Sigmoid colon (tissue), 7 donors: ENCODE measurements at regions of chr5 and their contacts with region 1.

Region 1: GRCh38 chr5:55601204-55601618 is 66.4 kb upstream of the PLPP1 start:
- DNase-seq: peak; percentile 95
- H3K4me3 ChIP-seq: peak overlapping the region in 2 of 4 donors; percentile 19
- H3K27ac ChIP-seq: peak overlapping the region; percentile 76 to 93 (median 88)
- H3K4me1 ChIP-seq: peaks cover 0 to 80% (median 78%) of the 10 kb centered on the region in 4 donors
- H3K27me3 ChIP-seq: no peaks in the 10 kb centered on the region
- CTCF ChIP-seq: no peak
- EP300 ChIP-seq: peak in 3 of 4 donors; percentile 39 to 90 (median 63)
- POLR2A ChIP-seq: no peak

Region 2: DNA sequence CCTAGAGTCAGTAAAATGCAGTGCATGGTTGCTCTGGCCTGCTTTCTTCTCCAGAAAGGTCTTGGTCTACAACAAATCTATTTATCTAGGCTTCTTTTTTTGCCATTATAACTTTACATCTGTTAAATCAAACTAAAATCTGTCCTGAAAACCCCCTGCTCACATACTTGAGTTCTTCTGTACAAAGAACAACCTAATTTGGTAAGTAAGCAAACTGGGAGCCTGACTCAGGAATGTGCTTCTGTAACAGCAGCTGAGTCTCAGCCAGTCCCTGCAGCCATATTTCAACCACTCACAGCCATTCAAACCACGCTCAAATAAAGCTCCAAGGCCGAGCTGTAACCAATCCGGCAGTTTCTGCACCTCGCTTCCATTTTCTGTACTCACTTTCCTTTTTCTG is 162.2 kb before region 1 on chr5:
- intact Hi-C with region 1: loop called (anchors 5 kb)
- DNase-seq: peak; percentile 87
- H3K4me3 ChIP-seq: no peak overlapping the region
- H3K27ac ChIP-seq: peak overlapping the region; percentile 80 to 92 (median 85)
- H3K4me1 ChIP-seq: peaks cover 0 to 88% (median 79%) of the 10 kb centered on the region in 4 donors
- H3K27me3 ChIP-seq: no peaks in the 10 kb centered on the region
- CTCF ChIP-seq: no peak
- EP300 ChIP-seq: peak in 2 of 4 donors; percentile 45 to 55
- POLR2A ChIP-seq: no peak

Region 3: GRCh38 chr5:55480781-55481180 is 120.4 kb before region 1 on chr5:
- intact Hi-C with region 1: no loop called
- DNase-seq: no peak
- H3K4me3 ChIP-seq: no peak overlapping the region
- H3K27ac ChIP-seq: no peak overlapping the region
- H3K4me1 ChIP-seq: peaks cover 0 to 39% (median 17%) of the 10 kb centered on the region in 4 donors
- H3K27me3 ChIP-seq: no peaks in the 10 kb centered on the region
- CTCF ChIP-seq: no peak
- EP300 ChIP-seq: no peak
- POLR2A ChIP-seq: no peak

Region 4: GRCh38 chr5:55672477-55672911 is 71.3 kb after region 1 on chr5:
- intact Hi-C with region 1: loop called (anchors 5 kb)
- DNase-seq: no peak
- H3K4me3 ChIP-seq: no peak overlapping the region
- H3K27ac ChIP-seq: peak overlapping the region in 3 of 4 donors; percentile 41 to 60 (median 60)
- H3K4me1 ChIP-seq: peaks cover 0 to 65% (median 41%) of the 10 kb centered on the region in 4 donors
- H3K27me3 ChIP-seq: no peaks in the 10 kb centered on the region
- CTCF ChIP-seq: no peak
- EP300 ChIP-seq: no peak
- POLR2A ChIP-seq: no peak